ENCODE measurements at regions of chrX and their contacts with region 1.

Region 1: GRCh38 chrX:123833387-123833786 is 26.5 kb upstream of the XIAP start:
- DNase-seq: peak; percentile 50
- ATAC-seq: peak; percentile 89
- H3K4me3 ChIP-seq: no peak overlapping the region
- H3K27ac ChIP-seq: no peak overlapping the region
- H3K4me1 ChIP-seq: peaks cover 9 to 16% of the 10 kb centered on the region in 2 experiments
- H3K27me3 ChIP-seq: no peaks in the 10 kb centered on the region
- CTCF ChIP-seq: peak; percentile 54 to 65 (median 58); a peak in 5 of 6 replicates
- POLR2A ChIP-seq: no peak
- RAD21 ChIP-seq: peak; percentile 89

Region 2: DNA sequence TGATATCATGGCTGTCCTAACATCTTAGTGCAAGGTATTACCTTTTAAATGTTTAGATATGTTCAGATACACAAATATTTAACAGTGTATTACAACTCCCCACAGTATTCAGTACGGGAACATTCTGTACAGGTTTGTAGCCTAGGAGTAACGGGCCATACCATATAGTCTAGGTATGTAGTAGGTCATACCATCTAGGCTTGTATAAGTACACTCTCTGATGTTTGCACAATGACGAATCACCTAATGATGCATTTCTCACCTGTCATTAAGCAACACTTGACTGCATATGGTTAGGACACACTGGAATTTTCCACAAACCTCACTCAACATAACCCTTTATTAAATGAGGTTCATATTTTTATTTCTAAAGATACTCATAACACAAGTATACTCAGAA is 168.2 kb before region 1 on chrX:
- CTCF ChIA-PET with region 1: no interaction called
- POLR2A ChIA-PET with region 1: no interaction called
- RAD21 ChIA-PET with region 1: no interaction called
- intact Hi-C with region 1: no loop called
- DNase-seq: no peak
- ATAC-seq: peak; percentile 49; the same call in 1 of the 2 replicates
- H3K4me3 ChIP-seq: no peak overlapping the region
- H3K27ac ChIP-seq: no peak overlapping the region; the same call in 1 of the 2 replicates
- H3K4me1 ChIP-seq: peaks cover 2 to 4% of the 10 kb centered on the region in 2 experiments; a peak in 1 of 4 replicates
- H3K27me3 ChIP-seq: no peaks in the 10 kb centered on the region
- CTCF ChIP-seq: no peak
- POLR2A ChIP-seq: no peak
- RAD21 ChIP-seq: no peak

Region 3: GRCh38 chrX:123779908-123780396 is 53.4 kb before region 1 on chrX:
- CTCF ChIA-PET with region 1: interaction called, 17 read pairs
- POLR2A ChIA-PET with region 1: no interaction called
- RAD21 ChIA-PET with region 1: interaction called in 1 of 2 experiments, 3 read pairs
- intact Hi-C with region 1: no loop called
- DNase-seq: no peak
- ATAC-seq: no peak
- H3K4me3 ChIP-seq: no peak overlapping the region
- H3K27ac ChIP-seq: no peak overlapping the region
- H3K4me1 ChIP-seq: peaks cover 2 to 17% of the 10 kb centered on the region in 2 experiments; a peak in 3 of 4 replicates
- H3K27me3 ChIP-seq: no peaks in the 10 kb centered on the region
- CTCF ChIP-seq: no peak
- POLR2A ChIP-seq: no peak
- RAD21 ChIP-seq: no peak

Region 4: DNA sequence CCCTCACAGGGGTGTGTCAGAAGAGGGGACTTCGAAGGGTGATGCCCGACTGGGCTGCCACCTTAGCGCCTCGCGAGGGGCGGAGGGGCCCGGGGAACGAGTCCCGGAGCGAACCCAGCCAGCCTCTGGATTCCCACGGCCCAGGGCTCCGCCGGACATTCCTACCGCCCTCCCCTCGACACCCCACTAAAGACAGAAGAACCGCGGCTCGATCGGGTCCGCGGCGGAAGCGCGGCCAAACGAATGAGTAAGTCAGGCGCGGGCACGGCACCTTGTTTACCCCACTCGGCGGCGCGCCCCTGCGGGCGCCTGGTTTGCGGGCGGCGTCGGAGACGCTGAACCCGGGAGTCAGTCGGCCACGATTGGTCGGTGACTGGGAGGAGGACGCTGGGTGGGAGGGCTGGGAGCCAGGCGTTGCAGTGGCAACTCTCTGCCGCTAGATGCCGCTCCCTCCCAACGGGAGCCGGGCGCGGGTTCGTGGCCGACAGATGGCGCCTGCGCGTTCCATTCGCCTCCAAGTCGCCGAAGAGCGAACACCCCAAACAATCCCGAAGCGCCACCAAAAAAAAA is 126.7 kb after region 1 on chrX:
- CTCF ChIA-PET with region 1: interaction called, 4 read pairs
- POLR2A ChIA-PET with region 1: no interaction called
- RAD21 ChIA-PET with region 1: no interaction called
- intact Hi-C with region 1: loop called (anchors 5 kb)
- DNase-seq: peak; percentile 68
- ATAC-seq: peak; percentile 76
- H3K4me3 ChIP-seq: peak overlapping the region; percentile 70 to 78
- H3K27ac ChIP-seq: peak overlapping the region; percentile 90
- H3K4me1 ChIP-seq: peaks cover 9 to 22% of the 10 kb centered on the region in 2 experiments
- H3K27me3 ChIP-seq: no peaks in the 10 kb centered on the region
- CTCF ChIP-seq: peak in 2 of 3 experiments; percentile 40 to 70; a peak in 4 of 6 replicates
- POLR2A ChIP-seq: peak; percentile 5
- RAD21 ChIP-seq: no peak

Region 5: DNA sequence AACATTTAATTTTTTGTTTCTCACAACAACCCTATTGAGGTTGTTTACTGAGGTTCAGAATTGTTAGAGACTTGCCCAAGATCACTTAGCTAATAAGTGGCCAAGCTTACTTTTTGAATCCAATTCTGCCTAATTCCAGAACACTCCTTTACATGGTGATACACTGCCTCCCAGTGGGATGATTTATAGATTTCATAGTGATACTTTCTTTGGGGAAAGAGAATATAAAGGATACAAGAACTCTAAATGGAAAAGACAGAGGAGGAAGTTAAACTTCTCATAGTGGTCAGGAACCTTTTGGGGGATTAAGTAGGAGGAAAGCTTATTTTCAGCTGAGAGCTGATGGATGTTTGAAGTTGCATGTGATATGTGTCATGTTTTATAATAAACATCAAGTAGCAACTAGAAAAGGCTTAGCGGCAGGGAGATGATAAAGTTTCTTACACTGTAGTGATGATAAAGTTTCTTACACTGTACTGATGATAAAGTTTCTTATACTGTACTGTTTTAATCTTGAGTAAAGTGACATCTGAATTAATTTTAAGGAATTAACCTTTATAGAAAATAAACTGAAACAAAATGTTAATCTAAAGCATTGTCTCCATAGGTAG is 143.4 kb after region 1 on chrX:
- CTCF ChIA-PET with region 1: interaction called, 56 read pairs
- POLR2A ChIA-PET with region 1: no interaction called
- RAD21 ChIA-PET with region 1: interaction called, 4 to 8 read pairs
- intact Hi-C with region 1: loop called (anchors 1 kb)
- DNase-seq: no peak
- ATAC-seq: peak; percentile 59
- H3K4me3 ChIP-seq: no peak overlapping the region
- H3K27ac ChIP-seq: no peak overlapping the region
- H3K4me1 ChIP-seq: peaks cover 0 to 3% of the 10 kb centered on the region in 2 experiments; a peak in 1 of 4 replicates
- H3K27me3 ChIP-seq: no peaks in the 10 kb centered on the region
- CTCF ChIP-seq: peak; percentile 10 to 83 (median 42); a peak in 3 of 6 replicates
- POLR2A ChIP-seq: no peak
- RAD21 ChIP-seq: peak; percentile 73

Region 6: DNA sequence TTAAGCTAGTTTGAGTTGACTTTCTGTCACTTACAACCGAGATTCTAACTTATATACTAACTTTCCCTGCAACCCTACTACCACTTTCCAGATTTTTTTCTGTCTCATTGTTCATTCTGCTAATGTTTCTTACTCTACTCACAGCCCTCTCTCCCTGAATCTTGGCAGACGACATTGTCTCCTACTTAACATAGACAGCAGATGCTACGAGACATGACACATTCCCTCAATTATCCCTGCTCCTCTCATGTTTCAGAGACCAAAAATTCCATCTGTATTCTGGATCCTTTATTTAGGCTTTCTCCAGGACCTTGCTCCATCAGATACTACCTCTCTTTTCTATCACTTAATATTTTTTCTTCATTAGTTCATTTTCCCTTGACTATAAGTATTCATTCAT is 1107.1 kb after region 1 on chrX:
- CTCF ChIA-PET with region 1: no interaction called
- POLR2A ChIA-PET with region 1: no interaction called
- RAD21 ChIA-PET with region 1: no interaction called
- intact Hi-C with region 1: no loop called
- DNase-seq: no peak
- ATAC-seq: no peak
- H3K4me3 ChIP-seq: no peak overlapping the region
- H3K27ac ChIP-seq: no peak overlapping the region
- H3K4me1 ChIP-seq: no peaks in the 10 kb centered on the region
- H3K27me3 ChIP-seq: no peaks in the 10 kb centered on the region
- CTCF ChIP-seq: no peak
- POLR2A ChIP-seq: no peak
- RAD21 ChIP-seq: no peak

Measured in HCT116 (cell line).